ENCODE measurements at regions of chr1 and their contacts with region 1.

Region 1: GRCh38 chr1:220879076-220879508 is at the start of gene HLX:
- DNase-seq: peak in 1 of 2 donors; percentile 95
- H3K4me3 ChIP-seq: peak within 1 kb of the TSS; percentile 68 to 93
- H3K27ac ChIP-seq: peak within 1 kb of the TSS; percentile 94
- H3K4me1 ChIP-seq: peaks cover 41% of the 10 kb centered on the region
- H3K27me3 ChIP-seq: no peaks in the 10 kb centered on the region
- CTCF ChIP-seq: no peak
- POLR2A ChIP-seq: peak in 1 of 2 donors; percentile 62
- total RNA-seq, gene HLX: 7.4 TPM

Region 2: DNA sequence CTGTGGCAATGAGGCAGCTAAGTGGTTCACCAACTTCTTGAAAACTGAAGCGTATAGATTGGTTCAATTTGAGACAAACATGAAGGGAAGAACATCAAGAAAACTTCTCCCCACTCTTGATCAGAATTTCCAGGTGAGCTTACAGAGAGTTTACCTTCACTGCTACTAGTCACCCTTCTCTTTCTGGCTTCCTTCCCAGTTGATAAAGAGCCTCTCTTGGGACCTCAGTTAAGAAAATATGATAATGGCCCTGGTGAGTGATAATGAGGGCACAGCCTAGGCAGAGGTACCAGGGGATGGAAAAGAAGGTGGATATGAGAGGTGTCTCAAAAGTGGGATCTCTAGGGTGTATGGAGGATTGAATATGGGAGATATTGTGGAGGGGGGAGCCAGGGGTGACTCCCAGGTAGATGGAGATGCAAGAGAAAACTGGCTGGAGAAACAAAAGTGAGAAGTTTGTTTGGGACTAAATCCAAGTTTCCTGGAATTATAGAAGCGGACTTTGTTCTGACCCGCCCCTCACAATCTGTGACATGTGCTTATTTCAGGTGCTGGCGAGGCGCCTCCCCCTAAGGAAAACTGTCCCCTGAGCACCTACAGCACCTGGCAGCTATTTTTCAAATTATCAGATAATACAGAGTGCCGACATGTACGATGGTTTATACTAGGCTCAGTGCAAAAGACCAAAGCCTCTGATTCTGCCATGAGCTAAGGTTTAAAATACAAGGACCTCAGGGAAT is 117.2 kb before region 1 on chr1:
- intact Hi-C with region 1: no loop called
- DNase-seq: peak in 1 of 2 donors; percentile 44
- H3K4me3 ChIP-seq: no peak overlapping the region
- H3K27ac ChIP-seq: no peak overlapping the region
- H3K4me1 ChIP-seq: no peaks in the 10 kb centered on the region
- H3K27me3 ChIP-seq: no peaks in the 10 kb centered on the region
- CTCF ChIP-seq: no peak
- POLR2A ChIP-seq: no peak

Region 3: DNA sequence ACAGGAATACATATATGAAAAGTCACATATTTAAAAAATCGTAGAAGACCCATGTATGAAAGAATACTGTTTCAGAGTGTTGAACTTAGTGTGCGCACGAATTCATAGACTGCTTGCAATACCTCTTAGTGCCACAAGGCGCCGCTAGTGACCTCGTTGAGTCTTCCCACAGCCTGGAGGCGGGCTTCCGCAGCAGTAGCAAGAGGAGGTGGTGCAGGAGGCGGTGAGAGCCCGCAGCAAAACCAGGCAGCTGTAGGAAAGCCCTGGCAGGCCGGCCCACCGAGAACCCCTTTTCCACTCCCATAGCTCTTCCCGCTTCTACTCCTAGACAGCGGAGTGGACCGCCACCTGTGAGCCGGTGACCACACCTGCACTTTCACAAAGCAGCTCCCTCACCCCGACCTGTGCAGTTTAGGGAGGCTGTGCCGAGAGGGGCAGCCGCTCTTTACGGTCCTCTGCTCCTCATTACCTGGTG is 68.9 kb before region 1 on chr1:
- intact Hi-C with region 1: loop called (anchors 10 kb)
- DNase-seq: peak in 1 of 2 donors; percentile 88
- H3K4me3 ChIP-seq: peak overlapping the region; percentile 6 to 17
- H3K27ac ChIP-seq: no peak overlapping the region
- H3K4me1 ChIP-seq: no peaks in the 10 kb centered on the region
- H3K27me3 ChIP-seq: no peaks in the 10 kb centered on the region
- CTCF ChIP-seq: peak; percentile 69 to 89 (median 85)
- POLR2A ChIP-seq: no peak

Region 4: DNA sequence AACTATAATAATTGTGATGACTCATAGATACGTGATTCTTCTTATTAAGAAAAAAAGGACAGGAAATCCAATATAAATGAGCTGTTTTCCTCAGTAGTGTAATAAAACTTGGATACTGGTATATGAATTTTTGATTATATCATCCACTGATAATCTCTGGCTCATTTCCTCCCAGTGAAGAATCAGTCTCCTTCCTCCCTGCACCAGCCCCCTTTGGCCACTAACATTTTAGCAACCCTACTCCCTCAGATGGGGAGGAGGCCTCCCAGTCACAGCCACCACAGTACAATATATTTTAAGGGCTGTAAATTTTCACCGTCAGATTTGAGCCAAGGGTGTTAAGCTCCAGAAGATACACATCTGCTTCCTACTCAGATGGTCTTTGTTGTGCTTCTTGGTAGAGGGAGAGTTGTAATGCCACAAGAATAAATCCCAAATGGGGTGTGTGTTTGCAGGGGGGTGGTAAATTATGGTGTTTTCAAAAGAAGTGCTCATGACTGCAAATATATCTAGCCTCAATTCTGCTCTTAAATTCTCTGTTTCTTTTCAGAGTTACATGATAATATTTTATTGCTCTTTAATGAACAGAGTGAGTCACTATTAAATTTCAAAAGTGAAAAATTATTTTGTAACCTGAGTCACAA is 153.7 kb after region 1 on chr1:
- intact Hi-C with region 1: loop called (anchors 5 kb)
- DNase-seq: no peak
- H3K4me3 ChIP-seq: no peak overlapping the region
- H3K27ac ChIP-seq: no peak overlapping the region
- H3K4me1 ChIP-seq: peaks cover 17% of the 10 kb centered on the region
- H3K27me3 ChIP-seq: no peaks in the 10 kb centered on the region
- CTCF ChIP-seq: no peak
- POLR2A ChIP-seq: no peak

Region 5: DNA sequence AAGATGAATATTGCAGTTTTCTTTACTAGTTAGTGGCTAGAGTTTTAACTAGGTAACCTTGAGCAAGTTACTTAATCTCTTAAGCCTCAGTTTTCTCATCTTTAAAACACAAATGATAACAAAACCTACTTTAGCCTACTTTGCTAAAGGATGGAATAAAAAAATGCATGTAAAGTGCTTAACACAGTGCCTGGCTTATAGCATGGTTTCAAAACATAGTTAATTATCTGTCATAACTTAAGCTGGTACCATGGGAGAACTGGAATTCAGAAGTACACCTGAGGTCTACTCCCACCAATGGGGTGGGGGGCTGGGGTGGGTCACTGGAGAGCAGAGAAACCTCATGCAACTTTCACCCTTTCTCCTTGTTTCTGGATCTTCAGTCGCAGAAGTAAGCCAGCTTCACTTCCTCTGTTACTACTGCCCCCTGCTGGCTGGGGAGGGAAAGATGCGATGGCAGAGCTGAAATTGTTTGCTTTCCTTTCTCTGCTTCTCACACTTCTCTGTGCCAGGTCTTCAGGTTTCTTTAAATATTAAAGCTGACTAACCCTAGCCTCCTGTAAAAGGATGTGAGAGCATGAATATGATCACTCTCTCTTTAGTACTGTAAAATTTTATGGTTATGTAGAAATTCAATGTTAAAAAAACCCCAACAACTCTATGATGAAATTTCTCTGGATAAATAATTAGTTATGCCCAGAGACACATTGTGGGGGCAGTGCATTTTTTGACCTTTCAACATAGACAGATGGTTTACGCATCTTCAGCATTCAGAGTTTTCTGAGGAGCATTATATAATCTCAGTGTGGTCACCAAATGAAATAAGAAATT is 324.3 kb after region 1 on chr1:
- intact Hi-C with region 1: loop called (anchors 10 kb)
- DNase-seq: no peak
- H3K4me3 ChIP-seq: no peak overlapping the region
- H3K27ac ChIP-seq: no peak overlapping the region
- H3K4me1 ChIP-seq: peaks cover 7% of the 10 kb centered on the region
- H3K27me3 ChIP-seq: no peaks in the 10 kb centered on the region
- CTCF ChIP-seq: peak in 2 of 3 experiments; percentile 49 to 61
- POLR2A ChIP-seq: no peak

Region 6: DNA sequence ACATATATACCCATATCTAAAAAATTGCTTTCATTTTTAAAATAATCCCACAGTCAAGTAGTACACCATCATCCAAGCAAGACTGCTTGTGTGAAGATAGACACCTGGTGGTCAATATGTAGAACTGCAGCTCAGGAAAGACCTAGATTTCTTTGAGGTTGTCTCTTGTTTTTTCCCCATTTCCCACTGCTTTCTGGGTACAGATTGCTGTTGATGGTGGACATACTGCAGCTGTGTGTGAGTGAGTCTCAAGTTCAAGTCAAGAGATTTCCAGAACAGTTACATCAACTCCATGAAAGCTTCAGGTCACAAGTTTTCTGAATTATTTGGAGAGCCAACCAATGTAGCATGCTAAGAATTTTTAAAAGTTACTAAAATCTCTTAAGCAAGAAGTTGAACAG is 556.4 kb after region 1 on chr1:
- intact Hi-C with region 1: loop called (anchors 5 kb)
- DNase-seq: no peak
- H3K4me3 ChIP-seq: no peak overlapping the region
- H3K27ac ChIP-seq: no peak overlapping the region
- H3K4me1 ChIP-seq: peaks cover 6% of the 10 kb centered on the region
- H3K27me3 ChIP-seq: no peaks in the 10 kb centered on the region
- CTCF ChIP-seq: peak; percentile 83 to 91 (median 84)
- POLR2A ChIP-seq: no peak

Region 7: GRCh38 chr1:221741711-221742554 is 862.8 kb after region 1 on chr1 and contains the start of gene DUSP10:
- intact Hi-C with region 1: loop called (anchors 10 kb)
- DNase-seq: peak; percentile 99 to 100
- H3K4me3 ChIP-seq: peak within 1 kb of the TSS; percentile 75 to 90
- H3K27ac ChIP-seq: peak within 1 kb of the TSS; percentile 98
- H3K4me1 ChIP-seq: peaks cover 23% of the 10 kb centered on the region
- H3K27me3 ChIP-seq: no peaks in the 10 kb centered on the region
- CTCF ChIP-seq: no peak
- POLR2A ChIP-seq: peak in 1 of 2 donors; percentile 91
- total RNA-seq, gene DUSP10: 4.7 TPM